ENCODE measurements at regions of chr1 and their contacts with region 1.

Region 1: GRCh38 chr1:232012773-232013386 is 386.3 kb downstream of the DISC1 start:
- DNase-seq: no peak

Region 2: GRCh38 chr1:231913493-231913892 is 99.4 kb before region 1 on chr1:
- intact Hi-C with region 1: no loop called
- DNase-seq: no peak

Region 3: DNA sequence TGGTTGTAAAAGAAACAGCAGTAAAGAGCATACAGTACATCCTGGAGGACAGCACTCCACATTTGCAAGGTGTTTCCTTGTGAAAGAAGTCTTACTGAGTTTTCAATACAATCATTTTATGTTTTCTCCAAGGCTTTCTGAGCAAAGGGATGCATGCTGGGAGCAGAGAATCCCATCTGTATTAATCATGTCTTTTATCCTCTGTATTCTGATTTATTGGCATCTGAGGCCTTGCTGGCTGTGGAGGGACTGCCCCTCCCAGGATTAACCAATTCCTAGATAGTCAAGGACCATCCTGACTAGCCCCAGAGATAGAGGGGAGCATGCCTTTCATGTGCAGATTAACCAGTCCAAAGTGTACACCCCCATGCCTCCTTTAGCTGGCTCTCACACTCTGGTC is 140.8 kb after region 1 on chr1:
- intact Hi-C with region 1: no loop called
- DNase-seq: no peak

Region 4: DNA sequence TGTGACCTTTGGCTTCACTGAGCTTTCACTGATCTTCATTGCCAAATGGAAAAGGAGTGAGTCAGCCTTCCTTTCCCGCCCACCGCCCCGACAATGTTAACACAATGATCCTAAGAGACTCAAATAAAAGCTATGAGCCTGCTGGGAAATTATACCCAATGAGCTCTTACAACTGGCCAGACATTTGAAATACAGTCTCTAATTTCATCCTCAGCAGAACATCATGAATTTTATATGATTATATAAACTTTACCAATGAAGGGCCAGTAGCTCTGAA is 364.6 kb after region 1 on chr1:
- intact Hi-C with region 1: loop called (anchors 10 kb)
- DNase-seq: no peak